Activated CD4-positive, alpha-beta T cell treated with anti-CD3 and anti-CD28 coated beads, Interleukin-2, amount 10 ng/mL, durations not matched to agents 7 days and 5 days (primary cell): ENCODE measurements at regions of chr7 and their contacts with region 1.

Region 1: GRCh38 chr7:873367-874002 is 2.9 kb upstream of the GET4 start:
- DNase-seq: peak; percentile 68
- H3K4me3 Mint-ChIP-seq: no peak overlapping the region
- H3K27ac Mint-ChIP-seq: peak overlapping the region; percentile 82
- H3K4me1 Mint-ChIP-seq: peaks cover 25% of the 10 kb centered on the region
- H3K27me3 Mint-ChIP-seq: no peaks in the 10 kb centered on the region

Region 2: DNA sequence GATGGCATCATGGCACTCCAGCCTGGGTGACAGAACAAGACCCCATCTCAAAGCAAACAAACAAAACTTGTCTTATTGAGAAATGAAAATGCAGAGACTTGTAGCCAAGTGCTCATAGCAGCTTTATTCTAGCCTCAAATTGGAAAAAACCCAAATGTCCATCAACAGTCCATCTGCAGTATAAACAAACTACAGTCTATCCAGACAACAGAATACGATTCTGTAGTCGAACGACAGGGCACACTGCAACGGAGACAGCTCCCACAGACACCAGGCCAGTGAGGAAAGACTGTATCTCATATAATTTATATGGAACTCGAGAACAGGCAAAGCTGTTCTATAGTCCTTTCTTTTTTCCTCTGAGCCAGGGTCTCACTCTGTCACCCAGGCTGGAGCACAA is 82.0 kb before region 1 on chr7:
- CTCF ChIA-PET with region 1: interaction called, 17 read pairs
- POLR2A ChIA-PET with region 1: no interaction called
- DNase-seq: no peak
- H3K4me3 Mint-ChIP-seq: no peak overlapping the region
- H3K27ac Mint-ChIP-seq: no peak overlapping the region
- H3K4me1 Mint-ChIP-seq: no peaks in the 10 kb centered on the region
- H3K27me3 Mint-ChIP-seq: no peaks in the 10 kb centered on the region

Region 3: DNA sequence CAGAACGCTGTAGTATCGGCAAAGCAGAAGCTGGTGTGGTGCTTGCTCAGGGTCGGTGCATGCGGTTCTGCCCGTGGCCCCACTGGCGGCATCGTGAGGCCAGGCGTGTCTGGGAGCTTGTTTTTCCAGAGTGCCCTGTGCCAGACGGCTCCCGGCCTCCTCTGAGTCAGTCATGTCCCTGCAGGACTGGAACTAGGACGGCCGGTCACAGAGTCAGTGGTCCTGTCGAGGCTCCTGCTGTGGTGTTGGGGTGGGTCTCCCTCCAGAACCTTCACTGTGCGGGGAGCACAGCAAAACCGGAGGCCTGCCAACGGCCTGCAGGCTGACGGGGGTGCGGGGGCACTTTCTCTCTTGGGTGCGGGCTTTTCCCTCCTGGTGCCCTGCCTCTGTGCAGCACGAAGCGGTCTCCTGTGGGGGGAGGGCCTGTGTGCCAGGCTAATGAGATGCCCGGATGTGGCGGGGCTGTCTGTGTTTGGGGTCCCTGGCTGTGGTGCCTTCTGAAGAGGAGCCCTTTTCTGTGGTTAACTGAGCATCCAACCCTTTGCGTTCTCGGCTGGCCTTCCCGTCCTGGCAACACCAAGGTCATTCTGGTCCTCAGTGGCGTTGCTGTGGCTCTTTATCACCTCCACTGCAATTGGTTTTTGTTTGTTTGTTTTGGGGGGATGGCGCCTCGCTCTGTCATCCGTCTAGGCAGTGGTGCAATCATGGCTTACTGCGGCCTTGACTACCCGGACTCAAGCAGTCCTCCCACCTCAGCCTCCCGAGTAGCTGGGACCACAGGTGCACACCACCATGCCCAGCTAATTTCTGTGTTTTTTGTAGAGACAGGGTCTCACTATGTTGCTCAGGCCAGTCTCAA is 10.9 kb after region 1 on chr7:
- CTCF ChIA-PET with region 1: no interaction called
- POLR2A ChIA-PET with region 1: no interaction called
- DNase-seq: no peak
- H3K4me3 Mint-ChIP-seq: no peak overlapping the region
- H3K27ac Mint-ChIP-seq: no peak overlapping the region
- H3K4me1 Mint-ChIP-seq: peaks cover 5% of the 10 kb centered on the region
- H3K27me3 Mint-ChIP-seq: no peaks in the 10 kb centered on the region